Breast epithelium (tissue), 4 donors: ENCODE measurements at regions of chr4 and their contacts with region 1.

Region 1: DNA sequence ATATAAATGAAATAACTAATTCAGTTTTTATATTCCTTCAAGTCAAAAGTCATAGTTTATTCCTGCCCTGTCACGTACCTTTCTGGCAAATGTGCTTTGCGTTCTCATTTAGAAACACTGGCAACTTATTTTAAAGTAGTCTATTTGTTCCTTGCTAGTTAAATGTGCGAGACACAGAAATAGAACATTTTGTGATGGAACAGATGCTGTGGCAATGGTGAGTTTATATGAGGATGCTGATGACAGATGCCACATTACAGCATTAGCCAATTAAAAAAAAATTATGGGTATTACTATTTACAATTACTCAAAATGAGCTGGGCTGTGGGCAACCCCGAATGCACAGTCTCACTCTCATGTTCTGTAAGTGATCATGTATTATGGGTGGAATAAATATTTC is 26.1 kb upstream of the EPHA5 start:
- DNase-seq: no peak
- H3K4me3 ChIP-seq: no peak overlapping the region
- H3K27ac ChIP-seq: no peak overlapping the region
- H3K4me1 ChIP-seq: no peaks in the 10 kb centered on the region
- H3K27me3 ChIP-seq: no peaks in the 10 kb centered on the region
- CTCF ChIP-seq: no peak
- POLR2A ChIP-seq: no peak

Region 2: DNA sequence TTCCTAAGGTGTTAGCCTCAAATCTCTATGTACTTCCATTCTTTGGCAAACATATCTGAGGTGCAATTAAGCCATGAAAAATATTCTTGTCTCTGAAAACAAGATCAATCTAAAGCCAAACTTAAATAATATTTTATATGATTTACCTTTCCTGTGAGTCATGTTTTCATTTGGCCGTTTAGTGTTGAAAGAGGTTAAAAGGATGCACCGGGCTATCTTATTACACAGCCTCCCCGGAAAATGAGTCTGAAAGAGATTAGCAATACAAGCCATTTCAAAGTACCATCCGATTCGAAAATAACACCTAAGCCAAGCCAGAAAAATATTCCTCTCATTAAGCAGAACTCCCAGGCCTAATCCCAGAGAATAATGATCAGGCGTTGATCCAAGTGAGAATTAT is 135.4 kb after region 1 on chr4:
- intact Hi-C with region 1: loop called (anchors 10 kb)
- DNase-seq: no peak
- H3K4me3 ChIP-seq: no peak overlapping the region
- H3K27ac ChIP-seq: no peak overlapping the region
- H3K4me1 ChIP-seq: no peaks in the 10 kb centered on the region
- H3K27me3 ChIP-seq: no peaks in the 10 kb centered on the region
- CTCF ChIP-seq: no peak
- POLR2A ChIP-seq: no peak

Region 3: DNA sequence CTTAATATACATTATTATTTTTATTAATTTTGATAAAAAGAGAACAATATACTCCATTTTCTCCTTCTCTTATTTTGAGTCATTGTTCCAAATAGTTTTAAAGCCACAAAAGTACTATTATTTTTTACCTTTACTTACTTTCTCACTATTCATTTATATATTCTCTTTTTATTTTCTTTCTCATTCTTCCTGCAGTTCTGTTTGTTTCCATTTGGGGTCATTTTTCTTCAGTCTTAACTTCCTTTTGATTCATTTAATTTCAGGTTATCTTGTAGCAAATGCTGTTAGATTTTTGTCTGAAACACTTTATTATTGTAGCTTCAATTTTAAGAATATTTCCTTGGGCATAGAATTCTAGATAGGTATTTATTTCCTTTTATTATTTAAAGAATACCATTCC is 412.5 kb after region 1 on chr4:
- intact Hi-C with region 1: no loop called
- DNase-seq: no peak
- H3K4me3 ChIP-seq: no peak overlapping the region
- H3K27ac ChIP-seq: no peak overlapping the region
- H3K4me1 ChIP-seq: no peaks in the 10 kb centered on the region
- H3K27me3 ChIP-seq: no peaks in the 10 kb centered on the region
- CTCF ChIP-seq: no peak
- POLR2A ChIP-seq: no peak